Prostate gland (tissue), 2 donors: ENCODE measurements at regions of chr17 and their contacts with region 1.

Region 1: DNA sequence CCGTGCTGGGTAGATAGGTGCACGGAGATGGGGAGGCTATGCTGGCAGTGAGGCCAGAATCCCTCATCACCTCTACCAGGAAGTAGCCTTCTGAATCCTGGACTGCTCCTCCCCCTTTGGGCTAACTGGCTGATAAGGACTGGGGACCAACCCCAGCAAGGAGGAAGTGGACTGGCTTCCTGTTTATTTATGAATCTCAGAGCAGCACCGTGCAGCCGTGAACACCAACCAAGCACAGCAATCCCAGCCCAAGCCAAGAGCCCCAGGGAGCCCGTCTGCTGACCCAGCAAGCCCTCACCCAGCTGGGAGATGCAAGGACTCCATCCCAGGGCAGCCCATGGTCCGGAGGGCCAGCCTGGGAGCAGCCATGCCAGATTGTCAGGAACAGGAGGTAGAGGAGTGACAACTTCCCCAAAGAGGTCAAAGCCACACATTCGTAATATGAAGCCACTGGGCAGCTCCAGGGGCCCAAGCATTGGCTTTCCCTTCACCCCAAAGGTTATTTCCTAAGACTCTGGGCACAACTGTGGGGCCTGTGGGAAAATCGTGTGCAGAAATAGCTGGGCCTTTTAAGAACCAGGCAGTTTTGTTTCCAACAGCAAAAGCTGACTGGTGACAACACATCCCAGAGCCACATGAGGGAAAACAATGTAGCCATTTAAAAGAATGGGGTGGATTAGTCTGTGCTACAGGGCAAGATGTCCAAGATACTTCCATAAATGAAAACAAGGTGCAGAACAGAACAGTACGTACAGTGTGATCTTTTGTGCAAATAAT is 23.9 kb downstream of the PHB1 start:
- DNase-seq: peak; percentile 28
- H3K4me3 ChIP-seq: no peak overlapping the region
- H3K27ac ChIP-seq: peak overlapping the region; percentile 51 to 87
- H3K4me1 ChIP-seq: peaks cover 12% of the 10 kb centered on the region
- H3K27me3 ChIP-seq: no peaks in the 10 kb centered on the region
- CTCF ChIP-seq: no peak
- POLR2A ChIP-seq: no peak

Region 2: DNA sequence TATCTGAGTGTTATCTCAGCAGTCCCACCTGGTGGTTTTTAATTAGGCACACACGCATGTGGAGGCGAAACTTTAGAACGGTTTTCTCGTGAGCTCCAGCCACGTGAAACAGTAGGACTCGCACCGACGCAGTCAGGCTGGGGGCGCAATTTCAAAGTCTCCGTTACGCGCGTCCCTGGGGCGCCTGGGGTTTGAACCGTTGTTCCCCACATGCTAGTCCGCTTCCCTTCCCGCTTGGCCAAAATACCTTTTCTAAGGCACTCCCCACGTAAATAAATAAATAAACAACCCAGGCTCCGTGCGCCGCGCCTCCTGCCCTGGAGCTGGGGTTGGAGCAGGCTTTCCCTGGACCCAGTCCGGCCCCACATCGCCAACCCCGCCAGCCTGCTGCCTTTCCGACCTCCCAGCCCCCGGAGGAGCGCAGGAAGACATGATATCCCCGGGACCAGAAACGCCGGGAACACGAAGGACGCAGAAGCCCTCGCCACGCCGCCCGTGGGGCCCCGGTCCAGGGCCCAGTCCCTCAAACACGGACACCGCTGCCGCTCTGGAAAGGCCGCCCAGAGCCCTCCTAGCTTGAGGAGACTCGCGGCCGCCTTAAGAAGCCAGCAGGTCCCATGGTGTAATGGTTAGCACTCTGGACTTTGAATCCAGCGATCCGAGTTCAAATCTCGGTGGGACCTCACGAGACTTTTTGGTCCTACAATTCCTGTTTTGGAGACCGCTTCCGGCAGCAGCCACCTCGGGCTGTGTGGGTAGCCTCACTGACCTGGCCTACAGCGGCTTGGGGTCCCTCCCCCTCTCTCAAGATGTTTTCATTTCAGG is 198.6 kb before region 1 on chr17:
- intact Hi-C with region 1: loop called (anchors 10 kb)
- DNase-seq: peak; percentile 93
- H3K4me3 ChIP-seq: peak overlapping the region; percentile 68 to 79
- H3K27ac ChIP-seq: peak overlapping the region; percentile 95 to 97
- H3K4me1 ChIP-seq: no peaks in the 10 kb centered on the region
- H3K27me3 ChIP-seq: no peaks in the 10 kb centered on the region
- CTCF ChIP-seq: peak in 3 of 4 experiments; percentile 31 to 44 (median 33)
- POLR2A ChIP-seq: peak; percentile 35

Region 3: GRCh38 chr17:49315551-49316257 is 75.0 kb before region 1 on chr17:
- intact Hi-C with region 1: loop called (anchors 1 kb)
- DNase-seq: peak; percentile 84
- H3K4me3 ChIP-seq: no peak overlapping the region
- H3K27ac ChIP-seq: peak overlapping the region in 1 of 2 donors; percentile 20
- H3K4me1 ChIP-seq: peaks cover 2% of the 10 kb centered on the region
- H3K27me3 ChIP-seq: no peaks in the 10 kb centered on the region
- CTCF ChIP-seq: peak; percentile 76 to 90 (median 80)
- POLR2A ChIP-seq: no peak

Region 4: DNA sequence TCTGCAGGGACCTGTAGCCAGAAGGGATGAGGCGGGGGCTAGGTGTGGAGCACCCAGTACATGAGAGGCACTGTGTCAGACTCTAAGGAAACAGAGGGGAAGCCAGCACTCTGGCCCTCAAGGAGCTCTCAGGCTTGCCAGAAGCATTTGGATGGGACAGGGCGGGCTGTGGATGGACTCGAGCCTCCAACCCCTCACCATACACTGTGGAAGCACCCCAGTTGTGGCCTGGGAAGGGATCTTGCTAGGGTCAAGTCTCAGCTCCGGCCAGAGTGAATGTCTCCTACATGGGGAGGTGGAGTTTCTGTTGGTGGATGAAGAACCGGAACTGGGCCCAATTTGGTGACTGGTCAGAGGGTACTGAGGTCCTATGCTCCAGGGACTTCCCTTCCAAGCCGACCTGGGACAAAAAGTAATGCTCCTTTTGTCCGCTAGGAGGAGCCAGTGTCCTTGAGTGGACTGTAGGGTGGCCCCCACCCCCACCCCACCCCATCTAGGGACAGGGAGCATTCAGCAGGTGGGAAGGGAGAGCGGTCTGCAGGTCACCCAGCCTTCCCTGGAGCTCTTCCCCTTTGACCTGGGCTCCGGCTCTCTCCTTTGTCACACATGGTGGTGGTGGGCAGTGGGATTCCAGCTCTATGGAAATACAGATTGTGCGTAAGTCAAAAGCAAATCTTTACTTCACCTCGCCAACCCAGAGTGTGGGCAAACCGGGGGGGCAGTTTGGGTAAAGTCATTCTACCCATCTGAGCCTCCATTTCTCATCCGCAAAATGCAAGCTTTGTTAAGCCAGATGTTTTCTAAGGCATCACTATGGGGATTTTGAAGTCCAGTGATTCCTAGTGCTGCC is 44.3 kb after region 1 on chr17:
- intact Hi-C with region 1: no loop called
- DNase-seq: peak; percentile 42
- H3K4me3 ChIP-seq: no peak overlapping the region
- H3K27ac ChIP-seq: no peak overlapping the region
- H3K4me1 ChIP-seq: no peaks in the 10 kb centered on the region
- H3K27me3 ChIP-seq: no peaks in the 10 kb centered on the region
- CTCF ChIP-seq: peak; percentile 14 to 75 (median 60)
- POLR2A ChIP-seq: no peak